Esophagus squamous epithelium (tissue), 5 donors: ENCODE measurements at regions of chr9 and their contacts with region 1.

Region 1: GRCh38 chr9:69054989-69055388 is 19.4 kb downstream of the FXN start:
- DNase-seq: no peak
- H3K4me3 ChIP-seq: no peak overlapping the region
- H3K27ac ChIP-seq: no peak overlapping the region
- H3K4me1 ChIP-seq: peaks cover 0 to 10% (median 0%) of the 10 kb centered on the region in 3 donors
- H3K27me3 ChIP-seq: no peaks in the 10 kb centered on the region
- CTCF ChIP-seq: no peak
- POLR2A ChIP-seq: no peak

Region 2: GRCh38 chr9:69190086-69190862 is 135.3 kb after region 1 on chr9:
- intact Hi-C with region 1: loop called (anchors 5 kb)
- DNase-seq: no peak
- H3K4me3 ChIP-seq: no peak overlapping the region
- H3K27ac ChIP-seq: no peak overlapping the region
- H3K4me1 ChIP-seq: peaks cover 0 to 55% (median 12%) of the 10 kb centered on the region in 3 donors
- H3K27me3 ChIP-seq: no peaks in the 10 kb centered on the region
- CTCF ChIP-seq: no peak
- POLR2A ChIP-seq: no peak